Activated T-helper 1 cell treated with anti-CD3 and anti-CD28 coated beads, Interleukin-12 subunit alpha, Interleukin-12 subunit beta, Interleukin-2, Interleukin-4 antibody, amounts not matched to agents 30 ng/mL and 10 ng/mL and 1 ng/mL, durations not matched to agents 14 hours and 24 hours and 36 hours (primary cell): ENCODE measurements at regions of chr12 and their contacts with region 1.

Region 1: DNA sequence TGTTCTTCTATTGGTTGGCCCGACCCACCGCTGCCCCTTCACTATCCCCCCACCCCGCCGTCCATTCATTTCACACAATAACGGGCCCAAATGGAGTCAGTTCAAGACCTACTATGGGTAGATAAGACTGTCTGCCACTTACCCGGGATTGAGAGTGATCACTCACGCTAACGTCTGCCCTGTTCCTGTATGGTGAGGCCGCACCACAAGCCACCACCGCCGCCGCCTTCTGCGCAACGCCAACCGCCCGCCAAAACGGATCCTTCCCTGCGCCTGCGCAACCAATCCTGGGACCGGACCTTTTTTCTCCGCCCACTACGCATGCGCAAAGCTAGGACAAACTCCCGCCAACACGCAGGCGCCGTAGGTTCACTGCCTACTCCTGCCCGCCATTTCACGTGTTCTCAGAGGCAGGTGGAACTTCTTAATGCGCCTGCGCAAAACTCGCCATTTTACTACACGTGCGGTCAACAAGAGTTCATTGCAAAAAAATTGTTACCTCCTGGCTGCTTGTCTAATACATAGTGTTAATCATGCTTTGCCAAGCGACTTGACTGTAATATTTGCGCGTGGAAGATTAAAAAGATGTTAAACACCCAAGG is at the start of gene CBX5:
- DNase-seq: peak; percentile 99
- H3K4me3 Mint-ChIP-seq: no peak within 1 kb of the TSS
- H3K27ac Mint-ChIP-seq: no peak within 1 kb of the TSS
- H3K4me1 Mint-ChIP-seq: peaks cover 59% of the 10 kb centered on the region
- H3K27me3 Mint-ChIP-seq: no peaks in the 10 kb centered on the region
- total RNA-seq, gene CBX5: 99.8 and 106 TPM in 2 replicates

Region 2: GRCh38 chr12:53500776-53501614 is 779.0 kb before region 1 on chr12 and contains the start of gene TARBP2:
- intact Hi-C with region 1: loop called (anchors 2 kb)
- DNase-seq: peak; percentile 93
- H3K4me3 Mint-ChIP-seq: peak within 1 kb of the TSS; percentile 95
- H3K27ac Mint-ChIP-seq: peak within 1 kb of the TSS; percentile 98
- H3K4me1 Mint-ChIP-seq: peaks cover 53% of the 10 kb centered on the region
- H3K27me3 Mint-ChIP-seq: peaks cover 2% of the 10 kb centered on the region
- total RNA-seq, gene TARBP2: 47.7 and 48.2 TPM in 2 replicates

Region 3: DNA sequence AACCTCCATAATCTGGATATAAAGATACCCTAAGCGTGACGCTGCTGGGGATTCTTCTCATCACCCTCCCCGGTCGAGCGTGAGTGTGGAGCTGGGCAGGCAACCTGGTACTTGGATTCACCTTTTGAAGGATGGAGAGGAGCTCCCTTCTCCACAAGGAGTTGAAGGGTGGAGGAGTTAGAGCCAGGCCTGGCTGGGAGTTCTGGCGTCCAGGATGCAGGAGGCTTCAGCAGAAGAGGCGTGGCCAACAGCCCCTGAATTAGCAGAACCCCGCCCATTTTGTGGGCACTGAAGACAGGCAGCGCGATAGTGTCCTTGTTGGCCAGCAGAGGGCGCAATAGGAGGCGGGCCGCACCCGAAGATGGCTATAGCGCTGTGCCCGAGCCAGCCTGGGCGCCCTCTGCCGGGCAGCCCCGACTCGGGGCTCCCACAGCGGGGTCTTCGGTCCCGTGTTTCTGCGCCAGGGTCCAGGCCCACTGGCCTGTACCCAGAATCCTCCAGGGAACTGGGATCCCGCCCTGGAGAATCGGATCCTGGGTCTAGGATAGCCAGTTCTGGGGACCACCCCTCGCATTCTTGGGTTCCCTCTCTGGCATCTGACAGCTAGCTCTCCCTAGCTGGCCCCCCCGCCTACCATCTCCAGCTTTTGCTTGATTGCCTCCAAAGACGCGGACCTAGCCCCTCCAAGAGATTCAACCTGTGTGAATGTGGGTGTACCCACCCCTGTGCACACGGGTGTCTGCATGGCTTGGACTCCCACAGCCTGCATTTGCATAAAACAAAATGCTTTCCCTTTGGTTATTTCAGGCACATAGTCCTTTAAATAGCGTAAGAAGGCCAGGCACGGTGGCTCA is 65.2 kb before region 1 on chr12:
- intact Hi-C with region 1: loop called (anchors 2 kb)
- DNase-seq: peak; percentile 86
- H3K4me3 Mint-ChIP-seq: peak overlapping the region; percentile 72
- H3K27ac Mint-ChIP-seq: no peak overlapping the region
- H3K4me1 Mint-ChIP-seq: peaks cover 19% of the 10 kb centered on the region
- H3K27me3 Mint-ChIP-seq: peaks cover 13% of the 10 kb centered on the region

Region 4: GRCh38 chr12:54259194-54260011 is 20.6 kb before region 1 on chr12:
- intact Hi-C with region 1: loop called (anchors 1 kb)
- DNase-seq: peak; percentile 19
- H3K4me3 Mint-ChIP-seq: peak overlapping the region; percentile 56
- H3K27ac Mint-ChIP-seq: peak overlapping the region; percentile 68
- H3K4me1 Mint-ChIP-seq: peaks cover 19% of the 10 kb centered on the region
- H3K27me3 Mint-ChIP-seq: no peaks in the 10 kb centered on the region

Region 5: DNA sequence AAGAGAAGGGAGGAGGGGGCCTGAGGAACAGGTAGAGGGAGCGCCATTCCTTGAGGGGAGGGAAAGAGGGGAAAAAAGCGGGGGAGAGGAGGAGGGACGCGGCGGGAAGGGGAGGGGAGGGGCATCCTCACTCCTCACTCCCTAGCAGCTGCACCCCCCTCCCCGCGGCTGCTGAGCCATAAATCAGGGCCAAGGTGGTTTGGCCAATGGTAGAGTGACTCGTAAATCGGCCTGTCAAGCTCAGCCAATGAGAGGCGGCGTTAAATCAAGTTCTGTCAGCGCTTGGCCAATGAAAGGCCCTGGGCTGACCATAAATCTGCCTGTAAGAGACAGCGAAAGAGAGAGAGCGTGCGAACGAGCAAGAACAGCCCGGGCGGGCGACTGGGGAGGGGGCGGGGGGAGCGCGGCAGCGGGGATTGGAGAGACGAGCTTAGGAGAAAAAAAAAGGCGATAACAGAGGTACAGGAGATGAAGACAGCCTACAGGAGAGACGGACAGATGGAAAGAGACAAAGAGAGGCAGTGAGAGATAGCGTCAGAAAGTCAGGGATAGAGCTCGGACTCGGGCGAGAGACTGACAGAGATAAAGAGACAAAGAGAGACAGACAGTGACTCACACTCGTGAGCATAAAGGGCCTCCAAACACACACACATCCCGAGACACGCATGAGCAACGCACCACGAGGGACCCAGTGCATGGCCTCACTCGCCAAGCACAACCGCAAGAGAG is 79.2 kb after region 1 on chr12:
- intact Hi-C with region 1: loop called (anchors 1 kb)
- DNase-seq: peak; percentile 93
- H3K4me3 Mint-ChIP-seq: no peak overlapping the region
- H3K27ac Mint-ChIP-seq: no peak overlapping the region
- H3K4me1 Mint-ChIP-seq: peaks cover 21% of the 10 kb centered on the region
- H3K27me3 Mint-ChIP-seq: peaks cover 2% of the 10 kb centered on the region

Region 6: GRCh38 chr12:54497883-54498282 is 217.9 kb after region 1 on chr12:
- intact Hi-C with region 1: loop called (anchors 2 kb)
- DNase-seq: no peak
- H3K4me3 Mint-ChIP-seq: peak overlapping the region; percentile 99
- H3K27ac Mint-ChIP-seq: peak overlapping the region; percentile 96
- H3K4me1 Mint-ChIP-seq: peaks cover 44% of the 10 kb centered on the region
- H3K27me3 Mint-ChIP-seq: no peaks in the 10 kb centered on the region